Psoas muscle (tissue), 8 donors: ENCODE measurements at regions of chr11 and their contacts with region 1.

Region 1: DNA sequence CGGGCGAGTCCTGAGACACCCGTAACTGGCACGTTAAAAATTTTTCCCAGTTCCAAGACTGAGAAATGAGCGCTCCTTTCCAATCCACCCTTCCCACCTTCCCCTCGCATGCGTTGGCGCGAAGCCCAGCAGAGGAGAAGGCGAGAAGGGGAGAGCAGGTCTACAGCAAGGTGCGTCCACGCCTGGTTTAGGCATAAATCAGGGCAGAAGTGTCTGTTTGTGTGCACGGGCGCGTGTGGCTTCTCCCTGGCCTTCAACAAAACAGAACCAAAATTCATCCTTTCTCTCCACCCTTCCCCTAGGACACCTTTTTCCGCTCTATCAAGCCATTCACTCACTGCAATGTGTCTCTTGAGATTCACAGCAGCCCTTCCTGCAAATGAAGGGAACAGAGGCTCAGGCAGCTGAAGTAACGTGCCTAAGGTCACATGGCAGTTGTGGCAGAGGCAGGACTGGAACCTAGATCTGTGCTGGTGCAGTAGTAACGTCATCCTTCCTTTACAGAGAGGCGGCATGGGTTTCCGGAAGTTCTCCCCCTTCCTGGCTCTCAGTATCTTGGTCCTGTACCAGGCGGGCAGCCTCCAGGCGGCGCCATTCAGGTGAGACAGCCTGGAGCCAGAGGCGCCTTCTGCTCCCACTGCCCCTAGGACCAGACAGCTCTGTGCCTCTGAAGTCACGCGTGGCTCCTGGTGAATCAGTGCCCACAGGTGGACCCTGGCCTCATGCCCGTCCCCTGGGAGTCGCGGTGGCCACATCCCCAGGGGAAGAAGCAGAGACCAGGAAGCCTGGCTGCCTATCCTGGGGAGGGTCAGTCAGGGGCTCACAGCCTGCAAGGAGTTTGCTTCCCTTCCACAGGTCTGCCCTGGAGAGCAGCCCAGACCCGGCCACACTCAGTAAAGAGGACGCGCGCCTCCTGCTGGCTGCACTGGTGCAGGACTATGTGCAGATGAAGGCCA is 1.1 kb downstream of the CALCB start:
- DNase-seq: peak; percentile 77 to 87
- ATAC-seq: peak; percentile 90 to 95 (median 94)
- H3K4me3 ChIP-seq: peak overlapping the region; percentile 38
- H3K27ac ChIP-seq: no peak overlapping the region
- H3K4me1 ChIP-seq: peaks cover 9% of the 10 kb centered on the region
- H3K27me3 ChIP-seq: peaks cover 3 to 54% (median 20%) of the 10 kb centered on the region in 3 donors
- CTCF ChIP-seq: peak; percentile 82

Region 2: GRCh38 chr11:14544611-14545010 is 529.9 kb before region 1 on chr11:
- intact Hi-C with region 1: no loop called
- DNase-seq: no peak
- ATAC-seq: no peak
- H3K4me3 ChIP-seq: no peak overlapping the region
- H3K27ac ChIP-seq: no peak overlapping the region
- H3K4me1 ChIP-seq: no peaks in the 10 kb centered on the region
- H3K27me3 ChIP-seq: no peaks in the 10 kb centered on the region
- CTCF ChIP-seq: no peak

Region 3: DNA sequence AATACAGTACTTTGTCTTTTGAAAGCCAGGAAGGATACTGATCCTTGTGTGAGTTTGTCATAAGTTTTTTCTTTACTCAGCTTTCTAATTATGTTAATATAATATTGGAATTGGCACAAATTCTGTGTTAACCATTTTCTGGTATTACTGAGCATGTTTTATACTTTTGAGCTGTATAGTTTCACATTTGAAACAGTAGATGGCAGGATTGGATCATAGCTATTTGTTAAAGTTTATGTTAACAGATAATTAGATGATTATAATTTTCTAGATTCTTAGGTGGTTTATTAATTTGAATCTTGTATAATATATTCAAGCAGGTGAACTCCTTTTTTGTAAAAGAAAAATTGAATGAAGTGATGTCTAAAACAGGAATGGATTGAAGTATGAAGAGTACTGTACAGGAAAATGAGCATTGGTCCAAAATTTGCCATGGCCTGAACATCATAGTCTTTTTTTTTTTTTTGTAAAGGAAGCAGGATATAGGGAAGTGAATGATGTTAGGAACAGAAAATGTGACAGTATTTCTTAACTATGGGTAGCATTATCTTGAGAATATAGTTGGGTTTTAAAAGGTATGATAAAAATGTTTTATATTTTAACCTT is 284.5 kb before region 1 on chr11:
- intact Hi-C with region 1: loop called in 1 of 2 experiments (anchors 10 kb)
- DNase-seq: no peak
- ATAC-seq: no peak
- H3K4me3 ChIP-seq: no peak overlapping the region
- H3K27ac ChIP-seq: no peak overlapping the region
- H3K4me1 ChIP-seq: no peaks in the 10 kb centered on the region
- H3K27me3 ChIP-seq: no peaks in the 10 kb centered on the region
- CTCF ChIP-seq: peak; percentile 36

Region 4: GRCh38 chr11:15093432-15093831 is 18.9 kb after region 1 on chr11:
- intact Hi-C with region 1: no loop called
- DNase-seq: no peak
- ATAC-seq: no peak
- H3K4me3 ChIP-seq: no peak overlapping the region
- H3K27ac ChIP-seq: no peak overlapping the region
- H3K4me1 ChIP-seq: no peaks in the 10 kb centered on the region
- H3K27me3 ChIP-seq: no peaks in the 10 kb centered on the region
- CTCF ChIP-seq: no peak